Esophagus squamous epithelium (tissue), 5 donors: ENCODE measurements at regions of chr7 and their contacts with region 1.

Region 1: DNA sequence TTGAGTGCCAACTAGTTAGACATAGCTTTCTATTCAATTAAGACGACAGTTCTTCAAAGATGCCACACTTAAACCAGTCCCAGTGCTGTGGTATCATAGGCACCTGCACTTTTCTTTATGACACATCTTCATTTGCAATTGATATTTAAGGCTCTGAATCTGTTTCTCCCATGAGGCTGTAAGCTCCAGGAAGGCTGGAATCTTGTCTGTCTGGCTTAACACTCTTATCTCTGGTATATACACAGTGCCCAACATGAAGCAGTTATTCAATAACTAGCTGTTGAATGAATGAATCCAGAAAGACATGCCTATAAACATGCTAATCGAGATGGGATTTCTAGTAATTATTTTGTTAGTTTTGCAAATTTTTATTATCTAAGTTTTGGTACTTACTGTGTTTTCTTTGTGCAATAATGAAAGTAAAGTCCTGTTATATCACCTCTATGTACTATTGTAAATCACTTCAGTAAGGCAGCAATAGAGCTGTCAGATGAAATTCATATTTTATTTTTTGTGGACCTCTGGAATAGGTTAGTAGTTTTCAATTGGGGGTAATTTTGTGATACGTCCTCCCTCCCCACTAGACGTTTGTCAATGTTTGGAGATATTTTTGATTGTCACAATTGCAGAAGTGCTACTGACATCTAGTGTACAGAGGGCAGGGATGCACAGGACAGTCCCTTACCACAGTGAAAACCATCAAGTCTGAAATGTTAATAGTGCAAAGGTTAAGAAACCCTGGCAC is 51.3 kb upstream of the STEAP4 start:
- DNase-seq: no peak
- H3K4me3 ChIP-seq: peak overlapping the region in 1 of 4 donors; percentile 21
- H3K27ac ChIP-seq: no peak overlapping the region
- H3K4me1 ChIP-seq: no peaks in the 10 kb centered on the region
- H3K27me3 ChIP-seq: no peaks in the 10 kb centered on the region
- CTCF ChIP-seq: peak in 3 of 6 experiments; percentile 12 to 48 (median 29)
- POLR2A ChIP-seq: no peak

Region 2: DNA sequence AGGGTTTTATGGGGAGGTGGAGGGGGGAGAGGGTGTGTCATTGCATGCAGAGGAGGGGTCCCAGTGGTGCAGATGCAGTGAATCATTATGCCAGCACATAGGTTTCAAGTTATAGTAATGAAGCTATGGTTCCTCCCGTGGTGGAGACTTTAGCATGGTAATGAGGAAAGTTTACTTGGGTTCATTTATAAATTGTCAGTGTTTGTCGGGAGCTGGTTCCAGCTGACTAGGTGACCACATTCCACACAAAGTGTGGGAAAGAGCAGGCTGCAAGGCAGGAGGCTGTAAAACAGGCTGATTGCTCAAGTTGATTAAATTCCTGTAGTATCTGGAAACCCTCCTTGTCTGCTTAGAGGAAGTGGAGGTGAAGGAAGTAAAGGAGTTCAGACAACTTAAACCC is 217.0 kb before region 1 on chr7:
- intact Hi-C with region 1: no loop called
- DNase-seq: no peak
- H3K4me3 ChIP-seq: no peak overlapping the region
- H3K27ac ChIP-seq: no peak overlapping the region
- H3K4me1 ChIP-seq: no peaks in the 10 kb centered on the region
- H3K27me3 ChIP-seq: no peaks in the 10 kb centered on the region
- CTCF ChIP-seq: no peak
- POLR2A ChIP-seq: no peak

Region 3: GRCh38 chr7:88243345-88243909 is 114.5 kb before region 1 on chr7:
- intact Hi-C with region 1: loop called (anchors 10 kb)
- DNase-seq: no peak
- H3K4me3 ChIP-seq: no peak overlapping the region
- H3K27ac ChIP-seq: no peak overlapping the region
- H3K4me1 ChIP-seq: no peaks in the 10 kb centered on the region
- H3K27me3 ChIP-seq: no peaks in the 10 kb centered on the region
- CTCF ChIP-seq: peak in 5 of 6 experiments; percentile 58 to 81 (median 67)
- POLR2A ChIP-seq: no peak